ENCODE measurements at regions of chr6 and their contacts with region 1.

Region 1: GRCh38 chr6:27177485-27178406 is 69.8 kb upstream of the PRSS16 start:
- DNase-seq: peak; percentile 46 to 92
- H3K4me3 ChIP-seq: peak overlapping the region; percentile 75 to 81
- H3K27ac ChIP-seq: peak overlapping the region; percentile 80 to 85
- H3K4me1 ChIP-seq: peaks cover 0 to 7% of the 10 kb centered on the region in 2 donors
- H3K27me3 ChIP-seq: no peaks in the 10 kb centered on the region
- CTCF ChIP-seq: peak in 2 of 3 experiments; percentile 53 to 66

Region 2: GRCh38 chr6:27126815-27127537 is 50.8 kb before region 1 on chr6:
- intact Hi-C with region 1: loop called (anchors 1 kb)
- DNase-seq: peak; percentile 51 to 95
- H3K4me3 ChIP-seq: peak overlapping the region; percentile 39 to 61
- H3K27ac ChIP-seq: peak overlapping the region; percentile 59 to 64
- H3K4me1 ChIP-seq: peaks cover 0 to under 1% of the 10 kb centered on the region in 2 donors
- H3K27me3 ChIP-seq: no peaks in the 10 kb centered on the region
- CTCF ChIP-seq: peak; percentile 75 to 90 (median 75)

Region 3: DNA sequence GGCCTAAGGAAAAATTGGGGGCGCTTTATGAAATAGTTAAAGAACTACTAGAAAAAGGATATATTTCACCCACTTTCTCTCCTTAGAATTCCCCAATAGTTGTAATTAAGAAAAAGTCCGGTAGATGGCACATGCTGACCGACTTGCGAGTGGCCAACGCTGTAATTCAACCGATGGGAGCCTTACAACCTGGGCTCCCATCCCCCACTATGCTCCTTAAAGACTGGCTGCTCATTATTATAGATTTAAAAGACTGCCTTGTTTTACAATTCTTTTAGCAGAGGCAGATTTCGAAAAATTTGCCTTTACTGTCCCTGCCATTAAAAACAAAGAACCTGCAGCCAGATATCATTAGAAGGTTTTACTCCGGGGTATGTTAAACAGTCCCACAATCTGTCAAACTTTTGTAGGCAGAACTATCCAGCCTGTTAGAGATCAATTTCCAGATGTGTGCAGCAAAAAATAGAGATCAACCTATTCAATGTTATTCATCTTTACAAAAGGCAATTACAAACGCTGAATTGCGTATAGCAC is 11.2 kb after region 1 on chr6:
- intact Hi-C with region 1: loop called (anchors 1 kb)
- DNase-seq: peak in 1 of 2 donors; percentile 76
- H3K4me3 ChIP-seq: peak overlapping the region; percentile 75 to 78
- H3K27ac ChIP-seq: peak overlapping the region; percentile 85 to 90
- H3K4me1 ChIP-seq: peaks cover 0 to 2% of the 10 kb centered on the region in 2 donors
- H3K27me3 ChIP-seq: no peaks in the 10 kb centered on the region
- CTCF ChIP-seq: peak; percentile 63 to 82 (median 71)

Region 4: GRCh38 chr6:27251606-27252251 is 74.0 kb after region 1 on chr6:
- intact Hi-C with region 1: no loop called
- DNase-seq: peak in 1 of 2 donors; percentile 65
- H3K4me3 ChIP-seq: peak overlapping the region; percentile 53 to 76
- H3K27ac ChIP-seq: no peak overlapping the region
- H3K4me1 ChIP-seq: peaks cover 7 to 15% of the 10 kb centered on the region in 2 donors
- H3K27me3 ChIP-seq: no peaks in the 10 kb centered on the region
- CTCF ChIP-seq: peak in 1 of 3 experiments; percentile 14

Region 5: GRCh38 chr6:27472617-27473400 is 295.1 kb after region 1 on chr6 and contains the start of gene ZNF184:
- intact Hi-C with region 1: loop called (anchors 2 kb)
- DNase-seq: peak; percentile 75 to 97
- H3K4me3 ChIP-seq: peak within 1 kb of the TSS; percentile 65 to 89
- H3K27ac ChIP-seq: peak within 1 kb of the TSS; percentile 84 to 86
- H3K4me1 ChIP-seq: peaks cover 0 to 8% of the 10 kb centered on the region in 2 donors
- H3K27me3 ChIP-seq: no peaks in the 10 kb centered on the region
- CTCF ChIP-seq: peak in 2 of 3 experiments; percentile 7 to 12
- total RNA-seq, gene ZNF184: 2.1 TPM

Region 6: DNA sequence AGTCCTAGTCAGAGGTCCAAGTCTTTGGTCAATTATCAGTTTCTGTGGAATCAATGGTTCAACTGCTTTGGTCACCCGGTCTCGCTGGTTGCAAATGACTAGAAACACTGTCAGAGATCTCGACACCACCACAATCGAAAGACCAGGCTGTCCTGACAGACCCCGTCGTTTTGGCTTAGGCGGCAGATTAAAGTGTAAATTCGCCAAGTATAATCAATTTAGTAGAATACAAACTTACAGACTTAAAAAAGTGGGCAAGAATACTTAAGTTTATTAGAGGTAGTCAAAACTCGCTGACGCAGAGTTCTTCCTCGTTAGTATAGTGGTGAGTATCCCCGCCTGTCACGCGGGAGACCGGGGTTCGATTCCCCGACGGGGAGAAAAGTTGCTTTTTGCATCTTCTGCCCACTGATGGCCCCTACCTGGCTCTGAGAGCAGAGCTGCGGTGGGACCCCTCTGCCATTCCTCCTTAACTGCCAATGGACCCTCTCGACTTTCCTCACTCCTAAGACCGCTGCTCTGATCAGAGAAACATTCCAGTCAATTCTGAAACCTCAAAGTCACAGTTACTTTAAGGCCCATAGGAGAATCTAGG is 325.8 kb after region 1 on chr6:
- intact Hi-C with region 1: loop called (anchors 5 kb)
- DNase-seq: peak in 1 of 2 donors; percentile 78
- H3K4me3 ChIP-seq: peak overlapping the region; percentile 49 to 59
- H3K27ac ChIP-seq: peak overlapping the region in 1 of 2 donors; percentile 31
- H3K4me1 ChIP-seq: no peaks in the 10 kb centered on the region
- H3K27me3 ChIP-seq: no peaks in the 10 kb centered on the region
- CTCF ChIP-seq: no peak